CD8-positive, alpha-beta T cell (primary cell): ENCODE measurements at regions of chr3 and their contacts with region 1.

Region 1: DNA sequence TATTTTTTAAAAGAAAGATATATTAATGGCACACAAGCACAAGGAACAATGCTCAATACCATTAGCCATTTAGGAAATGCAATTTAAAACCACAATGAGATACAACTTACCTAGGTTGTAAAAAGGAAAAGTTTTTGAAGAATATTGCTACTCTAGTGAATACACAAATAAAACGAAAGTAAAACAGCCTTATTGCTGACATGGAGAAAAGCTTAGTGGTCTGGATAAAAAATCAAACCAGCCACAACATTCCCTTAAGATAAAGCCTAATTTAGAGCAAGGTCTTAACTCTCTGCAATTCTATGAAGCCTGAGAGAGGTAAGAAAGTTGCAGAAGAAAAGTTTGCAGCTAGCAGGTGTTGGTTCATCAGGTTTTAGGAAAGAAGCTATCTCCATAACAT is 892.7 kb upstream of the ALCAM start:
- DNase-seq: no peak
- ATAC-seq: no peak
- H3K4me3 ChIP-seq: no peak overlapping the region
- H3K4me3 Mint-ChIP-seq: no peak overlapping the region
- H3K27ac ChIP-seq: no peak overlapping the region
- H3K27ac Mint-ChIP-seq: no peak overlapping the region
- H3K4me1 ChIP-seq: no peaks in the 10 kb centered on the region
- H3K4me1 Mint-ChIP-seq: no peaks in the 10 kb centered on the region
- H3K27me3 ChIP-seq: no peaks in the 10 kb centered on the region
- H3K27me3 Mint-ChIP-seq: no peaks in the 10 kb centered on the region
- CTCF ChIP-seq: no peak

Region 2: GRCh38 chr3:104206936-104207335 is 267.1 kb before region 1 on chr3:
- CTCF ChIA-PET with region 1: no interaction called
- POLR2A ChIA-PET with region 1: no interaction called
- intact Hi-C with region 1: no loop called
- DNase-seq: no peak
- ATAC-seq: no peak
- H3K4me3 ChIP-seq: no peak overlapping the region
- H3K4me3 Mint-ChIP-seq: no peak overlapping the region
- H3K27ac ChIP-seq: no peak overlapping the region
- H3K27ac Mint-ChIP-seq: no peak overlapping the region
- H3K4me1 ChIP-seq: no peaks in the 10 kb centered on the region
- H3K4me1 Mint-ChIP-seq: no peaks in the 10 kb centered on the region
- H3K27me3 ChIP-seq: no peaks in the 10 kb centered on the region
- H3K27me3 Mint-ChIP-seq: no peaks in the 10 kb centered on the region
- CTCF ChIP-seq: no peak

Region 3: GRCh38 chr3:104521606-104522336 is 47.8 kb after region 1 on chr3:
- CTCF ChIA-PET with region 1: no interaction called
- POLR2A ChIA-PET with region 1: no interaction called
- intact Hi-C with region 1: loop called in 1 of 2 experiments (anchors 1 kb)
- DNase-seq: peak in 2 of 9 experiments; percentile 1 to 9
- ATAC-seq: no peak
- H3K4me3 ChIP-seq: no peak overlapping the region
- H3K4me3 Mint-ChIP-seq: no peak overlapping the region
- H3K27ac ChIP-seq: no peak overlapping the region
- H3K27ac Mint-ChIP-seq: no peak overlapping the region
- H3K4me1 ChIP-seq: no peaks in the 10 kb centered on the region
- H3K4me1 Mint-ChIP-seq: no peaks in the 10 kb centered on the region
- H3K27me3 ChIP-seq: no peaks in the 10 kb centered on the region
- H3K27me3 Mint-ChIP-seq: no peaks in the 10 kb centered on the region
- CTCF ChIP-seq: no peak

Region 4: DNA sequence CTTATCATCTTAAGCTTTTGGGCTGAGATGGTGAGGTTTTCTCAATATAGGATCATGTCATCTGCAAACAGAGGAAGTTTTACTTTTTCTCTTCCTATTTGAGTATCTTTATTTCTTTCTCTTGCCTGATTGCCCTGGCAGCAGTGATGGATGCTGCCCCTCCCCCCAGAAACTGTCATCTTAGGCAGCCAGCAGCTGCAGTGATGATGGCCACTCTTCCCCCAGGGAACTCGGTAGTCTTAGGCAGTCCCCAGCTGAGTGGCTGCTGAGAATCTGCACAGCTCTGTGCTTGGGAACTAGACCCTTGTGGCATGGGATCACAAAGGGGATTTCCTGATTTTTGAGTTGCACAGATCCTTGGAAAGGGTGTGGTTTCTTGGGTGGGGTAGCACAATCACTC is 101.6 kb after region 1 on chr3:
- CTCF ChIA-PET with region 1: no interaction called
- POLR2A ChIA-PET with region 1: no interaction called
- intact Hi-C with region 1: no loop called
- DNase-seq: no peak
- ATAC-seq: no peak
- H3K4me3 ChIP-seq: no peak overlapping the region
- H3K4me3 Mint-ChIP-seq: no peak overlapping the region
- H3K27ac ChIP-seq: no peak overlapping the region
- H3K27ac Mint-ChIP-seq: no peak overlapping the region
- H3K4me1 ChIP-seq: no peaks in the 10 kb centered on the region
- H3K4me1 Mint-ChIP-seq: no peaks in the 10 kb centered on the region
- H3K27me3 ChIP-seq: no peaks in the 10 kb centered on the region
- H3K27me3 Mint-ChIP-seq: peaks cover 4% of the 10 kb centered on the region
- CTCF ChIP-seq: no peak